CD4-positive, alpha-beta T cell (primary cell): ENCODE measurements at regions of chr6 and their contacts with region 1.

Region 1: GRCh38 chr6:53064726-53065215 is 433 bp upstream of the FBXO9 start:
- DNase-seq: peak; percentile 90 to 98 (median 94)
- ATAC-seq: peak; percentile 86
- H3K4me3 ChIP-seq: peak overlapping the region; percentile 92
- H3K4me3 Mint-ChIP-seq: peak overlapping the region; percentile 97
- H3K27ac ChIP-seq: peak overlapping the region; percentile 68 to 84
- H3K27ac Mint-ChIP-seq: peak overlapping the region; percentile 92
- H3K4me1 ChIP-seq: peaks cover 36% of the 10 kb centered on the region
- H3K4me1 Mint-ChIP-seq: peaks cover 70% of the 10 kb centered on the region
- H3K27me3 ChIP-seq: no peaks in the 10 kb centered on the region
- H3K27me3 Mint-ChIP-seq: no peaks in the 10 kb centered on the region
- CTCF ChIP-seq: peak; percentile 14

Region 2: DNA sequence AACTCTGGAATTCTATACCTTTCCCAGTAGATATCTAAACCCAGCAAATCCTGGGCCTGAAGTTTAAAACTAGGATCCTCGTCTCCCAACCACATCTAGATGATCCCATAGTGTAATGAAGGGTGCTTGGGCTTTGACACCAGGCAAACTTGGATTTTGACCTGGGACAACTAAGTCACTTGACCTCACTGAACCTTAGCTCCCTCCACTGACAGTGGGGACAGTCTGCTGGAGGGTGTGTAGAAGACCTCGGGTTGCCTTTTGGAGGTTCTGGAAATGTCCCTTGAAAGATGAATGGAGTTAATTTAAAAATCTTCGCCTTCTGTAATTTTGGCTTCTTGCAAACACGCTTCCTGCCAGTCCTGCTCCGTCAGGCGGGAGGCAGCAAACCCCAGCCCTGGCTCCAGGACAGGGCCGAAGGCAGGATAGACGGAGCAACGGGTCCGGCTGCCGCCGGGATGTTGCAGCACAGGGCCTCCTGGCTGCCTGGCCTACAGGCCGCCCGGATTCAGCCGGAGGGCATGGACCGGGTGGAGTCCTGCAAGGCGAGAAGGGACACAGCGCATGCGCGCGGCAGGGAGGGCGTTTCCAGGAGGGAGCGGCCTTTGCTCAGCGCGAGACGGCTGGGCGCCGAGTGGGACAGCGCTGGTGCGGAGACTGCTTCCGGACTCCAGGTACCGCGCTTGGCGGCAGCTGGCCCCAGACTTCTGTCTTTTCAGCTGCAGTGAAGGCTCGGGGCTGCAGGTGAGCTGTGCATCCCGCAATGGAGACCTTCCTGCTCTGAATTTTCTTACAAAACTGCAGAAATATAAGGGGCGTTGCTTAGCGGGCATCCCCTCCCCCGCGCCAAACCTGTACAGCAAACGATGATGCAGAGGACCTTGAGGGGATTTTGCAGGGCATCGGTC is 394.0 kb before region 1 on chr6 and contains the start of gene TMEM14A:
- CTCF ChIA-PET with region 1: no interaction called
- POLR2A ChIA-PET with region 1: no interaction called
- intact Hi-C with region 1: loop called in 1 of 2 experiments (anchors 5 kb)
- DNase-seq: peak; percentile 81 to 95 (median 90)
- ATAC-seq: peak; percentile 94
- H3K4me3 ChIP-seq: peak within 1 kb of the TSS; percentile 69
- H3K4me3 Mint-ChIP-seq: peak within 1 kb of the TSS; percentile 91
- H3K27ac ChIP-seq: peak within 1 kb of the TSS in 1 of 2 donors; percentile 18
- H3K27ac Mint-ChIP-seq: peak within 1 kb of the TSS; percentile 29
- H3K4me1 ChIP-seq: peaks cover 24% of the 10 kb centered on the region
- H3K4me1 Mint-ChIP-seq: peaks cover 33% of the 10 kb centered on the region
- H3K27me3 ChIP-seq: no peaks in the 10 kb centered on the region
- H3K27me3 Mint-ChIP-seq: no peaks in the 10 kb centered on the region
- CTCF ChIP-seq: no peak
- total RNA-seq, gene TMEM14A: 3.4 TPM